Activated CD4-positive, alpha-beta T cell treated with anti-CD3 and anti-CD28 coated beads, Interleukin-2, amount 10 ng/mL, durations not matched to agents 24 days and 14 days (primary cell): ENCODE measurements at regions of chr18 and their contacts with region 1.

Region 1: GRCh38 chr18:44725300-44726096 is 44.8 kb downstream of the SETBP1 start:
- DNase-seq: peak; percentile 91
- H3K4me3 Mint-ChIP-seq: peak overlapping the region; percentile 72
- H3K27ac Mint-ChIP-seq: peak overlapping the region; percentile 93
- H3K4me1 Mint-ChIP-seq: peaks cover 80% of the 10 kb centered on the region
- H3K27me3 Mint-ChIP-seq: peaks cover 2% of the 10 kb centered on the region

Region 2: GRCh38 chr18:44358402-44358801 is 367.1 kb before region 1 on chr18:
- intact Hi-C with region 1: no loop called
- DNase-seq: no peak
- H3K4me3 Mint-ChIP-seq: no peak overlapping the region
- H3K27ac Mint-ChIP-seq: no peak overlapping the region
- H3K4me1 Mint-ChIP-seq: no peaks in the 10 kb centered on the region
- H3K27me3 Mint-ChIP-seq: no peaks in the 10 kb centered on the region

Region 3: GRCh38 chr18:44709307-44710126 is 16.0 kb before region 1 on chr18:
- intact Hi-C with region 1: loop called (anchors 2 kb)
- DNase-seq: no peak
- H3K4me3 Mint-ChIP-seq: no peak overlapping the region
- H3K27ac Mint-ChIP-seq: no peak overlapping the region
- H3K4me1 Mint-ChIP-seq: peaks cover 23% of the 10 kb centered on the region
- H3K27me3 Mint-ChIP-seq: peaks cover 27% of the 10 kb centered on the region

Region 4: GRCh38 chr18:44771956-44772917 is 46.7 kb after region 1 on chr18:
- intact Hi-C with region 1: no loop called
- DNase-seq: no peak
- H3K4me3 Mint-ChIP-seq: no peak overlapping the region
- H3K27ac Mint-ChIP-seq: peak overlapping the region; percentile 60
- H3K4me1 Mint-ChIP-seq: peaks cover 17% of the 10 kb centered on the region
- H3K27me3 Mint-ChIP-seq: peaks cover 26% of the 10 kb centered on the region

Region 5: DNA sequence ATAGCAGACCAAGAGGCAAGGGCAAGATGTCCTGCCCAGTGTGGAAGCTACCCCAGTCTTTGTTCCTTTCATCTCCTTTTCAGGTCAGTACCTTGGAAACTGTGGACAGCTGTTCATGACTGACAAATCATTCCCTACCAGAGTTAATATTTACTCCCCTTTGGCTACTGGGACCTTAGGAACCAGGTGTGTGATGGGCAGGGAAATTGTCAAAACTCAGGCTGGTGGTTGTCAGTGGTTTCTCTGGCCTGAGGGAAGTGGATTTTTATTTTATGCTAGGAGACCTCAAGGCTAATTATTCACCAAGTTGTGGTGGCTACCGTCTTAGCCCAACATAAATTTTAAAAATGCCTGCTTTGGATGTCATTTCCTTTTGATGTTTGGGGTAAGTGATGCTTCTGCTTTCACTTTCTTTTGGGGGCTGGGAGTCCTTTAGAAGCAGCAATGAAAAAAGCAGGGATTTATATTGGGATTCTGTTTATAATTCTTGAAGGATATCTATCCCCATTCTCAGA is 74.5 kb after region 1 on chr18:
- intact Hi-C with region 1: loop called (anchors 1 kb)
- DNase-seq: peak; percentile 56
- H3K4me3 Mint-ChIP-seq: peak overlapping the region; percentile 58
- H3K27ac Mint-ChIP-seq: peak overlapping the region; percentile 18
- H3K4me1 Mint-ChIP-seq: peaks cover 59% of the 10 kb centered on the region
- H3K27me3 Mint-ChIP-seq: no peaks in the 10 kb centered on the region

Region 6: GRCh38 chr18:44819944-44820510 is 94.5 kb after region 1 on chr18:
- intact Hi-C with region 1: loop called (anchors 5 kb)
- DNase-seq: no peak
- H3K4me3 Mint-ChIP-seq: no peak overlapping the region
- H3K27ac Mint-ChIP-seq: no peak overlapping the region
- H3K4me1 Mint-ChIP-seq: peaks cover 18% of the 10 kb centered on the region
- H3K27me3 Mint-ChIP-seq: peaks cover 31% of the 10 kb centered on the region

Region 7: DNA sequence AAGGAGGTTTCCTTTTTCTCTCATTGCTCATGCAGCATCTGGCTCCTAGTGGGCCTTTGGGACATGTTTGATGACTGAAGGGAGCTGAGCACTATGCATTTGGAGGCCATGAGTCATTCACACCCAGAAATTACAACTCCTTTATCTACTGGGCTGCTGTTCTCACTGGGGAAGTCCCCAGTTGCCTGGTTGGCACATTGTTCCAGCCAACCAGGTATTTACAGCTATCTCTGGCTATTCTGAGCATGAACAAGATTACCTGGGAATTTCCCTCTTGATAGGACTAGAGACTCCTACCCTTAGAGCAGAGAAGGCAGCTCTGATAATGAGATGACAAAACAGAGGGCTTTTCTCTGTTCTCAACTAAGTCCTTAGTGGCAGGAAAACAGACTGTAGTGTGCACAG is 161.7 kb after region 1 on chr18:
- intact Hi-C with region 1: loop called (anchors 1 kb)
- DNase-seq: peak; percentile 73
- H3K4me3 Mint-ChIP-seq: peak overlapping the region; percentile 59
- H3K27ac Mint-ChIP-seq: peak overlapping the region; percentile 93
- H3K4me1 Mint-ChIP-seq: peaks cover 27% of the 10 kb centered on the region
- H3K27me3 Mint-ChIP-seq: peaks cover 2% of the 10 kb centered on the region

Region 8: GRCh38 chr18:44895176-44895798 is 169.8 kb after region 1 on chr18:
- intact Hi-C with region 1: loop called (anchors 1 kb)
- DNase-seq: peak; percentile 73
- H3K4me3 Mint-ChIP-seq: no peak overlapping the region
- H3K27ac Mint-ChIP-seq: peak overlapping the region; percentile 53
- H3K4me1 Mint-ChIP-seq: peaks cover 41% of the 10 kb centered on the region
- H3K27me3 Mint-ChIP-seq: peaks cover 6% of the 10 kb centered on the region

Region 9: GRCh38 chr18:45441110-45441842 is 715.8 kb after region 1 on chr18:
- intact Hi-C with region 1: no loop called
- DNase-seq: no peak
- H3K4me3 Mint-ChIP-seq: no peak overlapping the region
- H3K27ac Mint-ChIP-seq: no peak overlapping the region
- H3K4me1 Mint-ChIP-seq: no peaks in the 10 kb centered on the region
- H3K27me3 Mint-ChIP-seq: no peaks in the 10 kb centered on the region